Activated B cell treated with CpG ODN at 0.5 μM for 24 hours (primary cell): ENCODE measurements at regions of chr3 and their contacts with region 1.

Region 1: DNA sequence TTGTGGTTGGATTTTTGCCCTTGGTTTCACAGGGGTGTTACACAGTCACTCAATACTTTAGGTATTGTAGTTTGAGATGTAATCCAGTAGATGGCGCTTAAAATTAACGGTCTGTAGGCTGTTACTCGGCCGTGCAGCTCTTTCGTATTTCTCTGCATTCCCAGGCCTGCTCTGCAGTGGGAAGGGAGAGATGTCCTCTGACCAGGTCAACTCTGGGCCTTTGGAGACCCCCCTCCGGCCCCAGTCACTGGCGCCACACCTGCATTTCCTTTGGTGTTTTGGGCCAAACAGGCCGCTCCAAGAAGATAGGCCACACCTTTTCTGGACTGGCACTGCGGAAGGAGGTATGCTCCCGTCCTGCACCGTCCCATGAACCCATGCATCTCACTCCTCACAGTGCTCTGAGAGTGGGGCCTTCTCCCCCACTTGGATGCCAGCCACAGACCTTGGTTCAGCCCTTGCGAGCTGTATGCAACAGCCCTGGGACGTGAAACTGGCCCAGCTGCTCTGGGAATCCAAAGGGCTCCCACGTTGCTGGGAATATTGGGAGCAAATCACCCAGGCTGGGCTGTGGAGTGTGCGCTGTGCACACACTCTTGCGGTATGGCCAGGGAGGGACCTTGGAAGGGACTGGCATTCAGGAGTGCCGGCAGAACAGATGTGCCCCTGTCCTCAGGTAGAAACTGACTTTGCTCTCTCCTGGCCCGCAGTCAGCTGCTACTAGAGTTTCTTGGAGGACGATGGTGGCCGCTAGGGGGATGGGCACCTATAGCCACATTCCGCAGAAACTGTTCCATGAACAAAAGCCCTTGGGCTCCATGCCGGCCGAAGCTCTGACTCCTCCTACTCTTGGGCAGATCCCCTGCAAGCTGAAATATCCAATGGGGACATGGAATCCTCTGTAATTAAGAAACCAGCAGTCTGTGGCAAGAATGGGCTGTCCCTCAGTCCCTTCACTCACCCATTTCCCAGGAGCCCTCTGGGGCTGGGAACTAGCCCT is 410.5 kb upstream of the CADM2 start:
- DNase-seq: no peak
- ATAC-seq: no peak
- H3K4me3 Mint-ChIP-seq: no peak overlapping the region
- H3K27ac Mint-ChIP-seq: no peak overlapping the region
- H3K4me1 Mint-ChIP-seq: no peaks in the 10 kb centered on the region
- H3K27me3 Mint-ChIP-seq: no peaks in the 10 kb centered on the region
- CTCF ChIP-seq: no peak

Region 2: DNA sequence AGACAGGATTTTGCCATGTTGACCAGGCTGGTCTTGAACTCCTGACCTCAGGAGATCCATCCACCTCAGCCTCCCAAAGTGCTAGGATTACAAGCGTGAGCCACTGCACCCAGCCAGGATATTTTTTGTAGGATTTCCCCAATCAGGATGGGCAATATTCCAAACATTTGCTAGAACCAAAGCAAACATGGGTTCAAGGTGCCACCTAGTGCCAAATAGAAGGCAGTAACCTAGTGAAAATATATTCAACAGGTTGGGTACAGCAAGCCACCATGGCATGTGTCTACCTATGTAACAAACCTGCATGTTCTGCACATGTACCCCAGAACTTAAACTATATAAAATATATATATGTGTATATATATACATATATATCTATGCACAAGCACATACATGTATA is 224.6 kb after region 1 on chr3:
- CTCF ChIA-PET with region 1: no interaction called
- POLR2A ChIA-PET with region 1: no interaction called
- intact Hi-C with region 1: loop called (anchors 1 kb)
- DNase-seq: no peak
- ATAC-seq: no peak
- H3K4me3 Mint-ChIP-seq: no peak overlapping the region
- H3K27ac Mint-ChIP-seq: no peak overlapping the region
- H3K4me1 Mint-ChIP-seq: no peaks in the 10 kb centered on the region
- H3K27me3 Mint-ChIP-seq: no peaks in the 10 kb centered on the region
- CTCF ChIP-seq: no peak